PC-9 (cell line): ENCODE measurements at regions of chr4 and their contacts with region 1.

Region 1: DNA sequence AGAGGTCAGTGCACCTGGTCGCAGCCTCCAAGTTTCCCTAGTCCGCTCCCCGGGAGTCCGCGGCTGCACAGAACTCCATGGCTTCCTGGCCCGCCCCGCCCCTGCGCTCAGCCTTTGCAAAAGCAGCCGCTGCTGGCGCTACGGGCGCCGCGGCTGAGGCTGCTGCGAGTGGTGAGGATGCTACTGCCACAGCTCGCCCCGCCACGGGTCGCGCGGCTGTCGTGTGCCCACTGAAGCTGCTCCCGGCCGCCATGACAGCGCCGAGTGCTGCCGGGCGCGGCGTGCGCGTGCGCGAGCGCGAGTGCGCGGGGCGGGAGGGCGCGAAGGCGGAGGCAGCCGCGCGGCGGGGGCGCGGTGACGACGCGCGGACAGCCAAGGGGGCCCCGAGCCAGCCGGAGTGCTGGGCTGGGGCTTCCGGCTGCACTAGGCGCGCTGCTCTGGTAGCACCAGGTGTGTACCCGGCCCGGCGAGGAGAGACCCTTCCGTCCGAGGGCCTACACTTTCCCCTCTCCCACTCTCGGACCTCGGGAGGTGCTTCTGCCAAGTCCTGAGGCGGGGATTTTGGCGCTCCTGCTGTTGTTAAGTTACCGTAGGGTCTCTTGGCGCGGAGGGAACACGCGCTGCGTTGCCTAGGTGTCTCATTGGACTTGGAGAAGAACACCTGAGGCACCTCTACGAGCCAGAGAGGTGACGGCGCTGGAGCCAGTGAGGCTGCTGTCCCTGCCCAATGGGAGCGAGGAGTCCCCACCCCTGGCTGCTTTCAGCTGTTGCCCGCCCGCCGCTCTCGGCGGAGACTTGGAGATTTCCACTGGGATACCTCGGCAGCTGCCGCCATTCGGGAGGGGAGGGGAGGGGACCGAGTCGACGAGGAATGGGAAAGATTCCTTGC is 619 bp upstream of the LRBA start:
- DNase-seq: peak; percentile 84 to 88
- H3K4me3 ChIP-seq: peak overlapping the region; percentile 92
- H3K27ac ChIP-seq: peak overlapping the region; percentile 80
- H3K4me1 ChIP-seq: peaks cover 26% of the 10 kb centered on the region
- H3K27me3 ChIP-seq: no peaks in the 10 kb centered on the region
- CTCF ChIP-seq: no peak

Region 2: DNA sequence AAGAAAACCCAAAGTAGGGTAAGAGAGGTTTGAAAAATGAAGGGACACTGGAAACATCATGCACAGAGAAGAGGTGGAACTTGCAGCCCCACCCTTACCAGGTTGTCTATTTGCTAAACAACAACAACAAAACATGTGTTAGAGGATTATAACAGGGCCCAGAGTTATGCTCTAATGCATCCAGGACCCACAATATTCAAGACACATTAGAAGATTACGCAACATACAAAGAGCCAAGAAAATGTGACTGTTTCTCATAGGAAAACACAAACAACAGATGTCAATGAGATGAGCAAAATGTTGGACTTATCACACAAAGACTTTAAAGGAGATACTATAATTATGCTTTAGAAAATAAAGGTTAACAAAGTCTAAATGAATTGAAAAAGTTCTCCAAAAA is 129.1 kb before region 1 on chr4:
- CTCF ChIA-PET with region 1: no interaction called
- POLR2A ChIA-PET with region 1: no interaction called
- intact Hi-C with region 1: loop called (anchors 10 kb)
- DNase-seq: no peak
- H3K4me3 ChIP-seq: no peak overlapping the region
- H3K27ac ChIP-seq: no peak overlapping the region
- H3K4me1 ChIP-seq: 0 out of 2 replicates have a peak, but pooled peaks cover 5% of the 10 kb centered on the region
- H3K27me3 ChIP-seq: no peaks in the 10 kb centered on the region
- CTCF ChIP-seq: no peak

Region 3: DNA sequence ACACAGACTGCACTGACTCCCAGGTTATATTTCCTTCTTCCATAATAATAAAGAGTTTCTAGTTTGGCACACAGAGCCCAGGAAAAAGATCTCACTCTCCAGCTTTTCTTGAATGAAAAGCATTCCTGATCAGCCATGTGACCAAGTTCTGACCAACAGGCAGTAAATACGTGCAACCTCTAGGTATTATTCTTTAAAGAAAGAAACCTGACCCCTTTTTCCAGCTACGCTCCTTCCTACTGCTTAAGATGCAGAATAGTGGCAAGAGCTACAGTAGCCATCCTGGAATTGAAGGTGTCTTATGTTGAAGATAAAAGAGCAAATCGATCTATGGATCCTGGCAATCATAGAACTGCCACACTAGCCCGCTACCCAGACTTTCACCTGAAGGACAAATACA is 77.3 kb before region 1 on chr4:
- CTCF ChIA-PET with region 1: no interaction called
- POLR2A ChIA-PET with region 1: no interaction called
- intact Hi-C with region 1: loop called (anchors 5 kb)
- DNase-seq: peak in 1 of 2 experiments; percentile 6
- H3K4me3 ChIP-seq: no peak overlapping the region
- H3K27ac ChIP-seq: no peak overlapping the region
- H3K4me1 ChIP-seq: no peaks in the 10 kb centered on the region
- H3K27me3 ChIP-seq: no peaks in the 10 kb centered on the region
- CTCF ChIP-seq: no peak

Region 4: DNA sequence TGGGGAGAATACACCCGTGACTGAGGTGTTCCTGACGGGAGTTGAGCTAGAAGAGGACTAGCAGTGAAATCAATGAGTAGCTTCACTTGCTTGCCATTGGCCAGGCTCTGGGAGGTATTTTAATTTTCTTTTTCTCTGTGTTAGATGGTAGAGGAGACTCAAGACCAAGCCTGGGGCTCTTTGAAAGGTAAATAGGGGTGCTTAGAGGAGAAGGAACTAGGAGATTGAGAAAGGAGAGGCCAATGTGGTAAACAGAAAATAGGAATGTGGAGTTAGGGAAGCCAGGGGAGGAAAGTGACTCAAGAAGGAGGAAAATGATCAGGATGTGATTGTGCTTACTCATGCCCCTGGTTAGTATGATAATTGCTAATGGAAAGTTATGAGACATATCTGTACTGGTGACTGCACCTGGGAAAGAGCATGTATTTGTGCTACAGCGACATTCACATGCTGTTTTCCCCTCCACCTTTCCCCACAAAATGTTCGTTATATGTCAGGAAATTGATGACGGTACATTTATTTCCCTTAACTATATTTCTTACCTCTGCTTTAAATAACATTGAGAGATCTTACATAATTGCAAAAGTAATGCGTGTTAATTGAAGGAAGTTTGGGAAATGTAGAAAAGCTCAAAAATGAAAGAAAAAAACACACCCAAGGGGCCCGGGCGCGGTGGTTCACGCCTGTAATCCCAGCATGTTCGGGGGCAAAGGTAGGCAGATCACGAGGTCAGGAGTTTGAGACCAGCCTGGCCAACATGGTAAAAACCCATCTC is 16.3 kb after region 1 on chr4:
- CTCF ChIA-PET with region 1: interaction called, 10 read pairs
- POLR2A ChIA-PET with region 1: interaction called, 28 read pairs
- intact Hi-C with region 1: no loop called
- DNase-seq: peak in 1 of 2 experiments; percentile 60
- H3K4me3 ChIP-seq: no peak overlapping the region
- H3K27ac ChIP-seq: peak overlapping the region; percentile 61
- H3K4me1 ChIP-seq: peaks cover 19% of the 10 kb centered on the region
- H3K27me3 ChIP-seq: no peaks in the 10 kb centered on the region
- CTCF ChIP-seq: no peak

Region 5: GRCh38 chr4:151099229-151099975 is 83.7 kb after region 1 on chr4 and contains the start of gene RPS3A:
- CTCF ChIA-PET with region 1: interaction called, 4 read pairs
- POLR2A ChIA-PET with region 1: interaction called, 4 read pairs
- intact Hi-C with region 1: loop called (anchors 1 kb)
- DNase-seq: peak; percentile 91 to 97
- H3K4me3 ChIP-seq: peak within 1 kb of the TSS; percentile 99
- H3K27ac ChIP-seq: peak within 1 kb of the TSS; percentile 91
- H3K4me1 ChIP-seq: peaks cover 9% of the 10 kb centered on the region; the same call in 1 of the 2 replicates
- H3K27me3 ChIP-seq: no peaks in the 10 kb centered on the region
- CTCF ChIP-seq: no peak; the same call in 1 of the 2 replicates
- total RNA-seq, gene RPS3A: 1,663 and 2,345 TPM in 2 replicates